ENCODE measurements at regions of chr10 and their contacts with region 1.

Region 1: GRCh38 chr10:58641095-58641531 is 128.4 kb downstream of the BICC1 start:
- DNase-seq: peak; percentile 70 to 77
- H3K4me3 ChIP-seq: no peak overlapping the region
- H3K4me3 Mint-ChIP-seq: peak overlapping the region; percentile 44
- H3K27ac Mint-ChIP-seq: peak overlapping the region; percentile 60
- H3K4me1 ChIP-seq: peaks cover 42% of the 10 kb centered on the region
- H3K4me1 Mint-ChIP-seq: peaks cover 55% of the 10 kb centered on the region
- H3K27me3 ChIP-seq: no peaks in the 10 kb centered on the region
- H3K27me3 Mint-ChIP-seq: no peaks in the 10 kb centered on the region
- CTCF ChIP-seq: peak; percentile 60 to 73

Region 2: GRCh38 chr10:58299580-58299979 is 341.5 kb before region 1 on chr10:
- CTCF ChIA-PET with region 1: no interaction called
- POLR2A ChIA-PET with region 1: no interaction called
- intact Hi-C with region 1: loop called (anchors 1 kb)
- DNase-seq: peak; percentile 83 to 90
- H3K4me3 ChIP-seq: peak overlapping the region; percentile 3; the same call in 1 of the 2 replicates
- H3K4me3 Mint-ChIP-seq: peak overlapping the region; percentile 37
- H3K27ac Mint-ChIP-seq: no peak overlapping the region
- H3K4me1 ChIP-seq: peaks cover 10% of the 10 kb centered on the region
- H3K4me1 Mint-ChIP-seq: peaks cover 9% of the 10 kb centered on the region
- H3K27me3 ChIP-seq: no peaks in the 10 kb centered on the region
- H3K27me3 Mint-ChIP-seq: no peaks in the 10 kb centered on the region
- CTCF ChIP-seq: peak; percentile 97 to 99

Region 3: GRCh38 chr10:58531084-58531695 is 109.9 kb before region 1 on chr10:
- CTCF ChIA-PET with region 1: interaction called, 31 read pairs
- POLR2A ChIA-PET with region 1: no interaction called
- intact Hi-C with region 1: loop called (anchors 1 kb)
- DNase-seq: peak; percentile 82 to 93
- H3K4me3 ChIP-seq: no peak overlapping the region
- H3K4me3 Mint-ChIP-seq: no peak overlapping the region
- H3K27ac Mint-ChIP-seq: peak overlapping the region; percentile 15
- H3K4me1 ChIP-seq: peaks cover 8% of the 10 kb centered on the region; the same call in 1 of the 2 replicates
- H3K4me1 Mint-ChIP-seq: peaks cover 28% of the 10 kb centered on the region
- H3K27me3 ChIP-seq: no peaks in the 10 kb centered on the region
- H3K27me3 Mint-ChIP-seq: no peaks in the 10 kb centered on the region
- CTCF ChIP-seq: peak; percentile 92 to 97

Region 4: GRCh38 chr10:58555170-58555929 is 85.8 kb before region 1 on chr10:
- CTCF ChIA-PET with region 1: no interaction called
- POLR2A ChIA-PET with region 1: interaction called, 3 read pairs
- intact Hi-C with region 1: loop called (anchors 1 kb)
- DNase-seq: peak; percentile 87 to 90
- H3K4me3 ChIP-seq: no peak overlapping the region
- H3K4me3 Mint-ChIP-seq: peak overlapping the region; percentile 54
- H3K27ac Mint-ChIP-seq: peak overlapping the region; percentile 27
- H3K4me1 ChIP-seq: peaks cover 74% of the 10 kb centered on the region
- H3K4me1 Mint-ChIP-seq: peaks cover 79% of the 10 kb centered on the region
- H3K27me3 ChIP-seq: no peaks in the 10 kb centered on the region
- H3K27me3 Mint-ChIP-seq: no peaks in the 10 kb centered on the region
- CTCF ChIP-seq: no peak

Region 5: DNA sequence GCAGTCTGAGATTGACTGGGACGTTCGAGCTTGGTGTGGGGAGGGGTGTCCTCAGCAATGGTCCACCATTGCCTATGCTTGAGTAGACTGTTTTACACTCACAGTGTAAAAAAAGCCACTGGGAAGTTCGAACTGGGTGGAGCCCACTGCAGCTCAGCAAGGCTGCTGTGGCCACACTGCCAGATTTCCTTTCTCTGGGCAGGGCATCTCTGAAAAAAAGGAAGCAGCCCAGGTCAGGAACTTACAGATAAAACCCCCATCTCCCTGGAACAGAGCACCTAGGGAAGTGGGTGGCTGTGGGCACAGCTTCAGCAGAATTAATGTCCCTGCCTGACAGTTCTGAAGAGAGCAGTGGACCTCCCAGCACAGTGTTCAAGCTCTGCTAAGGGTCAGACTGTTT is 48.1 kb before region 1 on chr10:
- CTCF ChIA-PET with region 1: no interaction called
- POLR2A ChIA-PET with region 1: interaction called, 3 read pairs
- intact Hi-C with region 1: loop called (anchors 2 kb)
- DNase-seq: no peak
- H3K4me3 ChIP-seq: no peak overlapping the region
- H3K4me3 Mint-ChIP-seq: no peak overlapping the region
- H3K27ac Mint-ChIP-seq: no peak overlapping the region
- H3K4me1 ChIP-seq: peaks cover 20% of the 10 kb centered on the region
- H3K4me1 Mint-ChIP-seq: peaks cover 28% of the 10 kb centered on the region
- H3K27me3 ChIP-seq: no peaks in the 10 kb centered on the region
- H3K27me3 Mint-ChIP-seq: no peaks in the 10 kb centered on the region
- CTCF ChIP-seq: no peak

Region 6: DNA sequence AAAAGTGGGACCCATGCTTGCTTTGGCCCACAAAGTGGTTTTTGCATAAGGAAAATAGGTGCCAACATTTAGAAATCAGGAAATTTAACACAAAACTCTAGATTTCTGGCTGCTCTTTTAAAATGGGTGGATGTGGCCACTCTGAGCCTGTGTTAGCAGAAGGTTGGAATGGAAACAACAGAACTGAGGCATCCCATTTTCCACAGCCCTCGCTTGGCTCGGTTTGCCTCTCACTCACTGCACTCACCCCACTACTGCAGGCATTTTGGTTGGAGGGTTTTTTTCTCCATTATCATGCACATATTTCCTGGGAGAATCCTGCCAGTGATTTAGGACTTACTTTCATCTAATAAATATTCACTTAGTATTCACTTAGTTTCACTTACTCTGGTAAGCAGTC is 50.4 kb after region 1 on chr10:
- CTCF ChIA-PET with region 1: no interaction called
- POLR2A ChIA-PET with region 1: no interaction called
- intact Hi-C with region 1: loop called (anchors 5 kb)
- DNase-seq: no peak
- H3K4me3 ChIP-seq: no peak overlapping the region
- H3K4me3 Mint-ChIP-seq: no peak overlapping the region
- H3K27ac Mint-ChIP-seq: no peak overlapping the region
- H3K4me1 ChIP-seq: no peaks in the 10 kb centered on the region
- H3K4me1 Mint-ChIP-seq: peaks cover 8% of the 10 kb centered on the region
- H3K27me3 ChIP-seq: no peaks in the 10 kb centered on the region
- H3K27me3 Mint-ChIP-seq: no peaks in the 10 kb centered on the region
- CTCF ChIP-seq: no peak

Region 7: DNA sequence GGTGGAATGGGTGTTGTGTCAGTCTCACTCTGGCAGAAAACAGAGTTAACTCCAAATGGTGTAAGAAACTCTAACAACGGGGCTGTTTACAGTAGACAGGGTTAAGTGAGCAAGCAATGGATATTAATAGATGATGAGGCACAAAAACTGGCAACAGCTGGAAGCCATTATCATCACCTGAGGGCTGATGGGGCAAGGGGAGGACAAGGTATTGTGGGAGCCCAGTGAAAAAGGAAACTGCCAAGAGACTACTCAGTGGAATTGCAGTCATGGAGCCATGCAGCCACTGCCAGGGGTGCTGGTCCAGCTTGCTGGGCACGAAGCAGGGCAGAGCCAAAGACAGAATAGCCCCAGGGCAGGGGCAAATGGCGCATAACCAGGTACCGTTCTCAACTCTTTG is 132.2 kb after region 1 on chr10:
- CTCF ChIA-PET with region 1: no interaction called
- POLR2A ChIA-PET with region 1: no interaction called
- intact Hi-C with region 1: loop called (anchors 5 kb)
- DNase-seq: no peak
- H3K4me3 ChIP-seq: no peak overlapping the region
- H3K4me3 Mint-ChIP-seq: no peak overlapping the region
- H3K27ac Mint-ChIP-seq: no peak overlapping the region
- H3K4me1 ChIP-seq: peaks cover 11% of the 10 kb centered on the region
- H3K4me1 Mint-ChIP-seq: peaks cover 16% of the 10 kb centered on the region
- H3K27me3 ChIP-seq: no peaks in the 10 kb centered on the region
- H3K27me3 Mint-ChIP-seq: no peaks in the 10 kb centered on the region
- CTCF ChIP-seq: no peak

Measured in Caco-2 (cell line).